ENCODE measurements at regions of chr1 and their contacts with region 1.

Region 1: DNA sequence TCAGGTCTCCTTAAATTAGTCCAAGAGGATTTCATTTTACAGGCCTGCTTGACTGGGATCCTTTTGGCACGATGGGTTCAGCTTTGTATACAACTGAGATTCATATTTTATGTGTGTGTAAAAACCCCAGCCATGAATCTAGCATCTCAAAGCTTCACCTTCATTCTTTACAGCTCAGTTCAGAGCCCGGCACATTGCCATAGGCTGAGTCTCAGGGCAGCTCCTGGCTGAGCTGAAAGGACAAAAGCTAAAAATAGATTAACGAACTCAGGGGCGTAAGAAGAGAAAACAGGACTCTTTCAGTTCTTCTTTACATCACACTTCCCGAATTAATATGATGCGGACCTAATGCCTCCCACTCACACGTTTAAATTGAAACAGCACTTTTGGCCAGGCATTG is 262.8 kb upstream of the PBX1 start:
- DNase-seq: peak; percentile 9 to 34
- ATAC-seq: peak in 5 of 8 donors; percentile 65 to 80 (median 71)
- H3K4me3 ChIP-seq: peak overlapping the region in 1 of 10 donors; percentile 17
- H3K27ac ChIP-seq: no peak overlapping the region
- H3K4me1 ChIP-seq: peaks cover 0 to 5% (median 0%) of the 10 kb centered on the region in 9 donors
- H3K27me3 ChIP-seq: no peaks in the 10 kb centered on the region
- CTCF ChIP-seq: no peak

Region 2: DNA sequence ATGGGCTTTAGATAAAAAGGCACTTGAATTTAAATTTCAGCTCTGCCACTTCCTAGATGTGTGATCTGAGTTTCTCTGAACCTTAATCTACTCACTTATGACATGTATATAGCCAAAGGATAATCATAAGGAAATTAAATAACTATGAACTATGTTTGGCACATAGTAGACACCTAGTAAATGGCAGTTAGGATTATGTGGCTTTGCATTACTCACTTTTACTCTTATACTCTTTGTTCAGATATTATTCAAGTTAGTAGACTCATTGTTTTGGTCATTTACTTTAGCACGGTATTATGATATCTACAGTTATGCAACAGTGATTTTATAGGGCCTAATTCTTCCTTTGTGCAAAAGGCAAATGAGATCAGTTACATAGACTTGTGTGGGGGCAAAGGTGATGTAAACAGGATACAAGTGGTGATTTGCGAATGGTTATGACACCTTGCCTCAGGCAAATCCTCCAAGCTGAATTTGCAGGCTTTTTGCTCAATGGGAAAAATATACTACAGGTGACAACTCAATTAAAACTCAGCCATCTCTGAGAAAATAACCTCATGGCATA is 34.4 kb before region 1 on chr1:
- intact Hi-C with region 1: no loop called
- DNase-seq: no peak
- ATAC-seq: no peak
- H3K4me3 ChIP-seq: no peak overlapping the region
- H3K27ac ChIP-seq: no peak overlapping the region
- H3K4me1 ChIP-seq: no peaks in the 10 kb centered on the region
- H3K27me3 ChIP-seq: no peaks in the 10 kb centered on the region
- CTCF ChIP-seq: no peak

Region 3: GRCh38 chr1:164356511-164356910 is 60.3 kb after region 1 on chr1:
- intact Hi-C with region 1: loop called in 1 of 10 experiments (anchors 10 kb)
- DNase-seq: no peak
- ATAC-seq: no peak
- H3K4me3 ChIP-seq: no peak overlapping the region
- H3K27ac ChIP-seq: no peak overlapping the region
- H3K4me1 ChIP-seq: peaks cover 0 to under 1% (median 0%) of the 10 kb centered on the region in 9 donors
- H3K27me3 ChIP-seq: no peaks in the 10 kb centered on the region
- CTCF ChIP-seq: no peak

Measured in heart right ventricle (tissue), 16 donors.